ENCODE measurements at regions of chr21 and their contacts with region 1.

Region 1: DNA sequence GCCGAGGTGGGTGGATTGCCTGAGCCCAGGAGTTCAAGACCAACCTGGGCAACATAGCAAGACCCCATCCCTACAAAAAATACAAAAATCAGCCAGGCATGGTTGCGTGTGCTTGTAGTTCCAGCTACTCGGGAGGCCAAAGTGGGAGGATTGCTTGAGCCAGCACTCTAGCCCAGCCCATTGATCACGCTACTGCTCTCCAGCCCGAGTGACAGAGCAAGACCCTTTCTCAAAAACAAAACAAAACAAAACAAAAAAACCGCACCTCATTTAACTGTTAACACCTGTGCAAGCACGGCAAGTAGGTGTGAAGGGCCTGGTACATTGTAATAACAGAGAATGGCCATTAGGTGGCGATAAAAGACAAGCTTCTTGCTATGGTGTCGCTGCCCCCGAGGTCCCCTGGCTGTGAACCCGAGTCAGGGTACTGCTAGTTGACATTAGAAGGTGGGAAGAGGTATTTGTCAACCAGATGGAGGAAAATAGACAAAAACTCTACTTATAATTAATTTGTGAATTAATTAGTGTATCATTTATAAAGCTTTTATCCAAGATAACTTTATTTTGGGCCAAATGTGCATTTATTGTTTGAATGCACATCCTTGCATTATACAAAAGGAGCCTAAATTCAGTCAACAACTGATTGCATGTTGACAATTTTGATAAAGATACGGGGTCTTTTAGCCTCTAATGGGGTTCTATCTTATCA is 66.5 kb downstream of the SH3BGR start:
- DNase-seq: peak; percentile 35
- H3K4me3 Mint-ChIP-seq: no peak overlapping the region
- H3K27ac Mint-ChIP-seq: no peak overlapping the region
- H3K4me1 Mint-ChIP-seq: no peaks in the 10 kb centered on the region
- H3K27me3 Mint-ChIP-seq: peaks cover 6% of the 10 kb centered on the region

Region 2: GRCh38 chr21:39715804-39716397 is 197.6 kb after region 1 on chr21:
- CTCF ChIA-PET with region 1: interaction called, 25 read pairs
- POLR2A ChIA-PET with region 1: no interaction called
- DNase-seq: peak; percentile 24
- H3K4me3 Mint-ChIP-seq: no peak overlapping the region
- H3K27ac Mint-ChIP-seq: no peak overlapping the region
- H3K4me1 Mint-ChIP-seq: no peaks in the 10 kb centered on the region
- H3K27me3 Mint-ChIP-seq: no peaks in the 10 kb centered on the region

Measured in activated CD4-positive, alpha-beta memory T cell treated with anti-CD3 and anti-CD28 coated beads, Interleukin-2, amount 10 ng/mL, durations not matched to agents 7 days and 5 days (primary cell).